ENCODE measurements at regions of chr5 and their contacts with region 1.

Region 1: GRCh38 chr5:132055808-132056609 is 4.4 kb upstream of the IL3 start:
- DNase-seq: peak; percentile 72 to 92 (median 77)
- H3K4me3 ChIP-seq: no peak overlapping the region
- H3K4me3 Mint-ChIP-seq: peak overlapping the region in 7 of 8 donors; percentile 3 to 85 (median 49)
- H3K27ac ChIP-seq: peak overlapping the region; percentile 67
- H3K27ac Mint-ChIP-seq: peak overlapping the region; percentile 75 to 99 (median 95)
- H3K4me1 ChIP-seq: peaks cover 60% of the 10 kb centered on the region
- H3K4me1 Mint-ChIP-seq: peaks cover 32 to 75% (median 51%) of the 10 kb centered on the region in 4 donors
- H3K27me3 ChIP-seq: no peaks in the 10 kb centered on the region
- H3K27me3 Mint-ChIP-seq: no peaks in the 10 kb centered on the region

Region 2: GRCh38 chr5:131899692-131900091 is 156.3 kb before region 1 on chr5:
- CTCF ChIA-PET with region 1: no interaction called
- POLR2A ChIA-PET with region 1: no interaction called
- intact Hi-C with region 1: no loop called
- DNase-seq: no peak
- H3K4me3 ChIP-seq: no peak overlapping the region
- H3K4me3 Mint-ChIP-seq: peak overlapping the region in 2 of 8 donors; percentile 36 to 58
- H3K27ac ChIP-seq: no peak overlapping the region
- H3K27ac Mint-ChIP-seq: peak overlapping the region in 1 of 7 donors; percentile 5
- H3K4me1 ChIP-seq: peaks cover 22% of the 10 kb centered on the region
- H3K4me1 Mint-ChIP-seq: peaks cover 13 to 44% (median 23%) of the 10 kb centered on the region in 4 donors
- H3K27me3 ChIP-seq: no peaks in the 10 kb centered on the region
- H3K27me3 Mint-ChIP-seq: peaks cover 4 to 5% of the 10 kb centered on the region in 2 donors

Region 3: DNA sequence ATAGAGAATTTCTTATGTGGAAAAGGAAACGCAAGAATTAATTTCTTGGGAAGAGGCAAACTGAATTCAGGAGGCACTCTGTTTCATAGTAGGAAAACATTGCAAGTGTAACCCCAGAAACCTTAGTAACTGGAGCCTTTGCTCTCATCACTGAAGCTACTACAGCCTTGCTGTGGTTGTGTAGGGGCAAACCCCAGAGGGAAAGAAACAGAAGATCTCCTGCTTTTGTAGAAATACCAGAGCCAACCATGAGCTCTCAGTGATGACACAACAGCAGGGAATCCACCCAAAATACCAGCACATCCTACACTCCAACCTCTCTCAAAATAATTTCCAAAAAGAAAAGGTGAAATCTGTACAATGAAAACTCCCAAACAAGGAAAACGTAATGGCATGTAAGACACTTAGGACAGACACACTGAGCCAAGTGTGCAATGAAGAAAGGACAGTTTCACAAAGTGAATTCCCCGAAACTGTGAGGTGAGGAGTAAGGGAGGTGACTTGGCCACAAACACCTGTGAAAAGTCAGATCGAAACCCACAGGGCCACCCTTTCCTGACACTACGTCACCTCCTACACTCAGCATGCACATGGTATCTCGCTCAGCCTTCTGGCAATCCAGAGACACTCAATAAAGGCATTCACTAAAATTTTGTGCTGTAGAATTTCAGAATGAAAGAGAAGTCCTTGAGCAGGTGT is 36.0 kb before region 1 on chr5:
- CTCF ChIA-PET with region 1: interaction called, 6 read pairs
- POLR2A ChIA-PET with region 1: interaction called, 5 read pairs
- intact Hi-C with region 1: loop called (anchors 1 kb)
- DNase-seq: peak; percentile 80 to 92 (median 82)
- H3K4me3 ChIP-seq: no peak overlapping the region
- H3K4me3 Mint-ChIP-seq: peak overlapping the region; percentile 4 to 77 (median 74)
- H3K27ac ChIP-seq: peak overlapping the region; percentile 67
- H3K27ac Mint-ChIP-seq: peak overlapping the region; percentile 90 to 99 (median 97)
- H3K4me1 ChIP-seq: peaks cover 52% of the 10 kb centered on the region
- H3K4me1 Mint-ChIP-seq: peaks cover 35 to 58% (median 44%) of the 10 kb centered on the region in 4 donors
- H3K27me3 ChIP-seq: no peaks in the 10 kb centered on the region
- H3K27me3 Mint-ChIP-seq: no peaks in the 10 kb centered on the region

Region 4: DNA sequence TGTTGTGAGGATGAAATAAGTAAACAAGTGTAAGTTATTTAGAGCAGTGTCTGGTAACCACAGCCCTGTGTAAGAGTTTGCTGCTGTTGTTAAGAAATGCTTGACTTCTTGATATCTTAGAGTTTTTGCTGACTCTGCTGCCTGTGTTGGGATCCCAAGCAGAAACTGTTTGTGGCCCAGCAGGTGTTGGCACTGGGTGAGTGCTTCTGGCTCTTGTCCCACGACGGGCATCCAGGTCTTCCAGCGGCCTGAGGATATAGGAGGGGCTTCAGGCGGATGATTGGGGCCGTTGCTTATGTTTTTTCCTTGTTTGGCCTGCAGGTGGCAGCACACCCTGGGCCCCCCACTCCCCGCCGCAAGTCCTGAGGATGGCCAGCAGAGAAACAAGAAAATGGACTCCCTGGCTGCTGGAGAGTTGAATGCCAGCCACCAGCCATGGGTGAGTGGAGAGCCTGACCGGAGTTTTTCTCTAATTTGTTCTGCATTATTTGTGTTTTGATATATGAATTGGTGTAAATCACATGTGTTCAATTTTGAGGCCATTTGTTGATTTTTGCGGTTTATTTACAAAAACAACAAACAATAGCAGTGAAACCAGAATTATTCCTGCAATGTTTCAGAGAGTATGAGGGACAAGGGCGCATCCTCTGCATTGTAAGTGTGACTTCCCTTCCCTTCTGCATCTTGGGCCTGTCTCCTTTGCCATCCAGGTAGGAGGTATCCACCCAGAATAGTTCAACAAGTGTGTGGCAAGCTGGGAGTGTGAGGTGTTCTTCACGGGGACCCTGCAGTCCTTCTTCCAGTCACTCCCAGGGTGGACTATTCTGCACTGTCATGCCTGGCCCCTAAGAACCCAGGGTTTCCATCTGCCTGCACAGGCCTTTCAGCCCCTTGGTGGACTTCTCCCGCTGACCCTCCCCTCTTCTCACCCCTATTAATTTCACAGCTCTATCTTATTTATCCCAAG is 363.8 kb after region 1 on chr5:
- CTCF ChIA-PET with region 1: no interaction called
- POLR2A ChIA-PET with region 1: no interaction called
- intact Hi-C with region 1: no loop called
- DNase-seq: peak; percentile 57 to 69 (median 64)
- H3K4me3 ChIP-seq: peak overlapping the region; percentile 38 to 51
- H3K4me3 Mint-ChIP-seq: peak overlapping the region; percentile 75 to 93 (median 80)
- H3K27ac ChIP-seq: peak overlapping the region; percentile 71
- H3K27ac Mint-ChIP-seq: peak overlapping the region; percentile 96 to 99 (median 97)
- H3K4me1 ChIP-seq: peaks cover 100% of the 10 kb centered on the region
- H3K4me1 Mint-ChIP-seq: peaks cover 76 to 98% (median 86%) of the 10 kb centered on the region in 4 donors
- H3K27me3 ChIP-seq: no peaks in the 10 kb centered on the region
- H3K27me3 Mint-ChIP-seq: no peaks in the 10 kb centered on the region